ENCODE measurements at regions of chr7 and their contacts with region 1.

Region 1: GRCh38 chr7:3154912-3155494 is 111.3 kb upstream of the CARD11 start:
- DNase-seq: no peak
- ATAC-seq: no peak
- H3K4me3 ChIP-seq: no peak overlapping the region
- H3K27ac ChIP-seq: no peak overlapping the region
- H3K4me1 ChIP-seq: no peaks in the 10 kb centered on the region
- H3K27me3 ChIP-seq: no peaks in the 10 kb centered on the region

Region 2: GRCh38 chr7:2863461-2864066 is 291.4 kb before region 1 on chr7:
- intact Hi-C with region 1: loop called in 1 of 4 experiments (anchors 5 kb)
- DNase-seq: peak; percentile 91 to 93 (median 92)
- ATAC-seq: peak; percentile 95 to 97
- H3K4me3 ChIP-seq: no peak overlapping the region
- H3K27ac ChIP-seq: peak overlapping the region; percentile 91
- H3K4me1 ChIP-seq: peaks cover 4% of the 10 kb centered on the region
- H3K27me3 ChIP-seq: no peaks in the 10 kb centered on the region

Region 3: DNA sequence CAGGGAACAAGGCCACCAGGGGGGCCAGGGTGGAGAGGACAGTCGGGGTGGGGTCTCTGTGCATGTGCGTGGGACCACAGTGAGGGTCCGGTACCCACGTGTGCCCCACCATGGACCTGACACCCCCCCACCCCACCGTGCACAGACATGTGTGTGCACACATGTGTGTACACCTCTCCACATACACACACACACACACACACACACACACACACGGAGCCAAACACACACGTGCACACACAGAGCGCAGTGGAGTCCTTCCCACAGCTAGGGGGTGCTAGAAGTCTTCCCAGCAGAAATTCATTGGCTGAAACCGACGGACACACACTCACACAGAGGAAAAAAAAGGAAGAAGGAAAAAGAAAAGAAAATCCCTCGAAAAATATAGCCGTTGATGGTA is 268.1 kb before region 1 on chr7:
- intact Hi-C with region 1: loop called in 2 of 4 experiments (anchors 10 kb)
- DNase-seq: peak in 2 of 3 donors; percentile 29 to 64
- ATAC-seq: peak; percentile 62 to 75
- H3K4me3 ChIP-seq: no peak overlapping the region
- H3K27ac ChIP-seq: no peak overlapping the region
- H3K4me1 ChIP-seq: no peaks in the 10 kb centered on the region
- H3K27me3 ChIP-seq: no peaks in the 10 kb centered on the region

Region 4: DNA sequence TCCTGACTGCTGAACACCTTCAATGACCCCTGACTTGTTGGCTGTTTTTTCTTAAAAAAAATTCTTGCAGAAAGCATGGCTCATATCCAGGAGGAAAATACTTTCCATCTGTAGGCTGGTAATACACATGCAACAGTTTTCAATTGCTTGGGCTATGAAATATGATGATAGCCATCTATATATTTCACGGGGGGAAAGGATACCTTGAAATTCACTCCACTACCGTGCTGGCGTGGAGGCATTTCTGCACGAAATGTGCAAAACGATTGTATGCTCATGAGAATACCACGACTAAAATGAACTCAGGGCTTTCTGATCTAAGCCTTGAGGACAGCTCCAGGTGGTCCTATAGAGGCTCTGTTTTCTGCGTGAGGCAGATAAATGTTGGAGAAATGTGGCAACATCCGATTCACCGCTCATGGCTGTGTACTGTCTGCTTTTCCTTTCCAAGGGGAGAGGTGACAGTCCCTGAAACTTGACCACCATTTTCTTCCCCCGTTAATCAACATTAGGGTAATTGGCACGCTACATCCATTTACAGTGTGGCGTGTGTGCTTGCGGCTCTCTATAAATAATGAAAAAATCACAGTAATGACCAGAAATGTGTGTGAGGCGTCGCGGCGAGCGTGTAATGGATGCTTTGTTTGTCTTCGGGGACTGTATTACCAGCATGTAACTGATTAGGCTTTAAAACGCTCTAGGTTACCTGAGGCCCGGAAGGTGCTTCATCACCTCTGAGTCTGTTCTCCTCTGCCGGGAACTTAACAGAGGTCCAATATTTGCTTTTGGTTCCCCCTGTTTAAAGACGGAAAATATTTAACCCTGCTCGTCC is 98.6 kb before region 1 on chr7:
- intact Hi-C with region 1: no loop called
- DNase-seq: no peak
- ATAC-seq: no peak
- H3K4me3 ChIP-seq: no peak overlapping the region
- H3K27ac ChIP-seq: no peak overlapping the region
- H3K4me1 ChIP-seq: no peaks in the 10 kb centered on the region
- H3K27me3 ChIP-seq: no peaks in the 10 kb centered on the region

Region 5: DNA sequence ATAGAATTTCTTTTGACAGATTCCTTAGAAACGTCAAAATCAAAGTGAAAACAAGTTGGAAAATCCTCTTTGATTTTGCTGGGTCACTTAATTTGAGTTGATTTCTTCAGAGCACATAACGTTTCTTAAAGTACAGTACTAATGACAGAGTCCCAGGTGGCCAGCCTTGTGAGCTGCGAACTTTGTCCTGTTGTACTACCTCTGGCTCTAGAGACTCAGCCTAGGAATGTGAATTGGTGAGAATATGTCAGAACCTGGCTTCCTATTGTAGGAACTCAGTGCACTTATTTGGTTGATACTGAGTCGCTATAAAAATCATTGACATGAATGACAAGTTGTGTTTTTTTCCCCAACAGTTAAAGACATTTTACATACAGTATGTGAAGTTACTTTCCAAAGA is 166.2 kb after region 1 on chr7:
- intact Hi-C with region 1: no loop called
- DNase-seq: no peak
- ATAC-seq: no peak
- H3K4me3 ChIP-seq: no peak overlapping the region
- H3K27ac ChIP-seq: no peak overlapping the region
- H3K4me1 ChIP-seq: no peaks in the 10 kb centered on the region
- H3K27me3 ChIP-seq: no peaks in the 10 kb centered on the region

Measured in right cardiac atrium (tissue), 5 donors.